Activated T-helper 1 cell treated with anti-CD3 and anti-CD28 coated beads, Interleukin-12 subunit alpha, Interleukin-12 subunit beta, Interleukin-2, Interleukin-4 antibody, amounts not matched to agents 30 ng/mL and 10 ng/mL and 1 ng/mL, durations not matched to agents 14 hours and 24 hours and 36 hours (primary cell): ENCODE measurements at regions of chr18 and their contacts with region 1.

Region 1: GRCh38 chr18:79644006-79644665 is 35.5 kb upstream of the CTDP1 start:
- DNase-seq: peak; percentile 49
- H3K4me3 Mint-ChIP-seq: no peak overlapping the region
- H3K27ac Mint-ChIP-seq: no peak overlapping the region
- H3K4me1 Mint-ChIP-seq: no peaks in the 10 kb centered on the region
- H3K27me3 Mint-ChIP-seq: peaks cover 6% of the 10 kb centered on the region

Region 2: DNA sequence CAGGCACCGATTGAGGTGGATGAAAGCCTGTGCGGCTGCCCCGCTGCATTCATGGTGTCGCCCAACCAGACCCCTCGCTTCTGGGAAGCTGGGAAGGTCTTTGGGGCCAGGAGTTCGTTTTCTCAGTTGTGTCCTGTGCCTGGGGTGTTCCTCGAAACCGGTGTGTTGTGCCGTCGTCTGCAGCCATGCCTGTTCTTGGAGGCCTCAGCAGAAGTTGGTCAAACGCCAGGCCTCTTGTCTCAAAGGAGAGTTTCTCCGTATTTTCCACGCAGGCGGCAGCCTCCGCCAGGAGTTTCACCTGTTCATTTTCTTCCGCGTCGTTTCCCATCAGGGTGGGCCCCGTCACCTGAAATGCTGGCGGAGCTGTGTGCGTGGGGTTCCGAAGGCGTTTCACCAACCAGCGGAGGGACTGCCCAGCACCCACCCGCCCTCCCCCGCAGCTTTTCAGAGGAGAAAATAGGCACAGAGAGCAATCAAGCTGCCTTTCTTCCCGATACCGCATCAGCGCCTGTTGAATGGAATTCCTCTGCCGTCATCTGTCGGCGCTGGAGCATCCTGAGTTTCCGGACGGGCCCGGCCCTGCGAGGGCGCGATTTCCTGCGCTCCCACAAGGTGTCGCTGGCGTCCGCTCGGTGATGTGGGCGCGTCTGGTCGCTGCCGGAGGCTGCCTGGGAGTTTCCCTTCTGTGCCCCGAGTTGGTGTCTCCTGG is 265.4 kb before region 1 on chr18:
- intact Hi-C with region 1: loop called (anchors 1 kb)
- DNase-seq: peak; percentile 76
- H3K4me3 Mint-ChIP-seq: no peak overlapping the region
- H3K27ac Mint-ChIP-seq: no peak overlapping the region
- H3K4me1 Mint-ChIP-seq: peaks cover 14% of the 10 kb centered on the region
- H3K27me3 Mint-ChIP-seq: no peaks in the 10 kb centered on the region

Region 3: DNA sequence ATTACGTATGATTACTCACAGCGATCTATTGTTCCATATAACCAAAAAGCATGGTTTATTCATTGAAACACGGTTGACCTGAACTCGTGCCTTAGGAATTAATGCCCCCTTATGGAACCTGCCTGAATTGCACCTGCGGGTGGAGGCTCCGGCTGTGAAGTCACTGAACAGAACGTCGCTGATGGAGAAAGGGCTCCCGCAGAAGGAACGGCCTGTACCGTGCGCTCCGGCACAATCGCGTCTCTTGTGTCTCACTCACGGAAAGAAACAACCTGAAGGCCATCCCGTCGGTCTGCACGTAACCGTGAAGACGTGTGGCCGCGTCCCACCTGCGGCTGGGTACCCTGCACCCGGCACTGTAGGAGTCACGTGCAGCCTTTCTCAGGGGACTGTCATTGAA is 115.3 kb before region 1 on chr18:
- intact Hi-C with region 1: loop called (anchors 1 kb)
- DNase-seq: peak; percentile 64
- H3K4me3 Mint-ChIP-seq: no peak overlapping the region
- H3K27ac Mint-ChIP-seq: no peak overlapping the region
- H3K4me1 Mint-ChIP-seq: peaks cover 20% of the 10 kb centered on the region
- H3K27me3 Mint-ChIP-seq: no peaks in the 10 kb centered on the region